Gastrocnemius medialis (tissue), 4 donors: ENCODE measurements at regions of chr22 and their contacts with region 1.

Region 1: GRCh38 chr22:23786752-23787599 is at the start of gene SMARCB1:
- DNase-seq: peak; percentile 90 to 97
- ATAC-seq: peak; percentile 96
- H3K4me3 ChIP-seq: peak within 1 kb of the TSS; percentile 78 to 93 (median 84)
- H3K27ac ChIP-seq: peak within 1 kb of the TSS; percentile 96 to 100 (median 98)
- H3K4me1 ChIP-seq: peaks cover 27 to 34% of the 10 kb centered on the region in 2 donors
- H3K27me3 ChIP-seq: no peaks in the 10 kb centered on the region
- CTCF ChIP-seq: peak in 2 of 5 experiments; percentile 20 to 23
- POLR2A ChIP-seq: peak; percentile 87 to 88
- total RNA-seq, gene SMARCB1: 37.8 to 65.6 (median 55.2) TPM

Region 2: DNA sequence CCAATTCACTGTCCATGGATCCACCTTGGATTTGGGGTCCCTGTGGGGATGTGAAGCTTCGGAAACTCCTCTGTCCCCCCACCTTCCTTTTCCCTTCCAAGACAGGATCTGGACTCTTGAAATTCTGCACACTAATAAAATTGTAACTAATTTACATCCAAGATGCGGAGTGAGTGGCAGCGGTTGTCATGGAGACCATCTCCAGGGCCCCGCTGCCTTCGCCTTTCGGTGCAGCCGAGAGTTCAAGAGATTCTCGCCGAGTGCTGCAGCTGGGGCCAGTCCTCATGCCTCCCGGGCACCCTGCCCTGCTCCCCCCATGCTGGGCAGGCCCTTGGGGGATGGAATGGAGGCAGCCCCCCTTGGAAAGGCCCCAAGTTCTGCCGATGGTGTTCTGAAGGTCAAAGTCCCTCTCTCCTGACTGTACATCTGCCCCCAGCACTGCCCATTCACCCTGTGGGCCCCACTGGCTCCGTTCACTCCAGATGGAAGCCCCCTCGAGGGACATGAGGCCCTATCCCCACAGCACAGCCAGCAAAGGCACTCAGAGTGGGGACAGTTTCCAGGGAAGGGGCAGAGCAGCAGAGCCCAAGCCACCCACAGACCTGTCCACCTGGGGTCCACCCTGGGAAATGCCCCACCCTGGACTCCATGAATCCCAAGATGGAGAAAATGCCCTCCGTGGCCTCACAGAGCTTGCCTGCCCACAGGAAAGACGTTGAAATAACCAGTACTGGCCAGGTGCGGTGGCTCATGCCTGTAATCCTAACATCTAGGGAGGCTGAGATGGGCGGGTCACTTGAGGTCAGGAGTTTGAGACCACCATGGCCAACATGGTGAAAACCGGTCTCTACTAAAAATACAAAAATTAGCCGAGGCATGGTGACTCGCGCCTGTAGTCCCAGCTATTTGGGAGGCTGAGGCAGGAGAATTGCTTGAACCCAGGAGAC is 232.8 kb before region 1 on chr22:
- in situ Hi-C with region 1: no loop called
- intact Hi-C with region 1: no loop called
- DNase-seq: no peak
- ATAC-seq: no peak
- H3K4me3 ChIP-seq: no peak overlapping the region
- H3K27ac ChIP-seq: no peak overlapping the region
- H3K4me1 ChIP-seq: no peaks in the 10 kb centered on the region
- H3K27me3 ChIP-seq: peaks cover 0 to 13% (median 11%) of the 10 kb centered on the region in 3 donors
- CTCF ChIP-seq: no peak
- POLR2A ChIP-seq: no peak

Region 3: GRCh38 chr22:23750714-23751440 is 36.1 kb before region 1 on chr22 and contains the start of gene ZNF70:
- in situ Hi-C with region 1: no loop called
- intact Hi-C with region 1: loop called (anchors 2 kb)
- DNase-seq: peak; percentile 67 to 85
- ATAC-seq: peak; percentile 73 to 80
- H3K4me3 ChIP-seq: peak within 1 kb of the TSS; percentile 62 to 89 (median 76)
- H3K27ac ChIP-seq: peak within 1 kb of the TSS; percentile 78 to 89 (median 84)
- H3K4me1 ChIP-seq: peaks cover 9 to 10% of the 10 kb centered on the region in 2 donors
- H3K27me3 ChIP-seq: no peaks in the 10 kb centered on the region
- CTCF ChIP-seq: peak in 3 of 5 experiments; percentile 12 to 30 (median 22)
- POLR2A ChIP-seq: peak; percentile 73 to 74
- total RNA-seq, gene ZNF70: 3.1 to 6.3 (median 4.2) TPM

Region 4: GRCh38 chr22:23823331-23823791 is 36.4 kb after region 1 on chr22:
- in situ Hi-C with region 1: no loop called
- intact Hi-C with region 1: loop called (anchors 2 kb)
- DNase-seq: no peak
- ATAC-seq: no peak
- H3K4me3 ChIP-seq: no peak overlapping the region
- H3K27ac ChIP-seq: peak overlapping the region; percentile 72 to 88 (median 81)
- H3K4me1 ChIP-seq: peaks cover 15 to 25% of the 10 kb centered on the region in 2 donors
- H3K27me3 ChIP-seq: no peaks in the 10 kb centered on the region
- CTCF ChIP-seq: no peak
- POLR2A ChIP-seq: no peak

Region 5: DNA sequence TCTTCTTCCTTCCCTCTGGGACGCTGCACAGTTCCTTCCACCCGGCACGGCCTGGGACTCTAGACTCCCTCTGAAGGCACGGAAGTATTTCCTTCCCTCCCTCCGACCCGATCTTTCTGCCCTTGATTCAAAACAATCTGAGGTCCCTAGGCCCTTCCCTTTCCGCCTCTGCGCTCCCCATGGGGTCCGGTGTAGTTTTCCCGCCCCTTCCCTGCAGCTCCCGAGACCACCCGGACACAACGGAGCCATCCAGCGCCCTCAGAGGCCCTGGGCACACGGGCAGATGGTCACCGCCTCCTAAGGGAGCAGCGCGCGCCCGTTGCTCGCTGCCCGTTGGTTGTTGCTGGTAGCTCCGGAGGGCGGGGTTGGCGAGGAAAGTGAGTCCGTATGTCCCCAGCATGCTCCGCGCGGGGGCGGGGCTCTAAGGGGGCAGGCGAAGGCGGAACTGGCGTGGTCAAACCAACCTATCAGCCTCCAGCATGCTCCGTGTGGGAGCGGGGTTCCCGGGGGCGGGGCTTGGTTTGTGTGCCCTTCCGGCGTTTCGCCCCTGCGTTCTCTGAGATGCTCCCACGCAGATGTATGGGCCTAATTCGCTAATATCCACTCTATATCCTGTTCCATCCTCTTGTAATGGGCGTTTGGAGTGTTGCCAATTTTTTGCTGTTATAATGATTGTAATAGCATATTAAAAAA is 126.8 kb after region 1 on chr22:
- in situ Hi-C with region 1: no loop called
- intact Hi-C with region 1: loop called (anchors 5 kb)
- DNase-seq: peak; percentile 98 to 100
- ATAC-seq: peak; percentile 98
- H3K4me3 ChIP-seq: peak overlapping the region; percentile 63 to 68 (median 66)
- H3K27ac ChIP-seq: peak overlapping the region; percentile 85 to 90 (median 88)
- H3K4me1 ChIP-seq: peaks cover 4 to 5% of the 10 kb centered on the region in 2 donors
- H3K27me3 ChIP-seq: no peaks in the 10 kb centered on the region
- CTCF ChIP-seq: no peak
- POLR2A ChIP-seq: peak; percentile 74 to 78

Region 6: GRCh38 chr22:24542641-24543040 is 755.7 kb after region 1 on chr22:
- in situ Hi-C with region 1: no loop called
- intact Hi-C with region 1: no loop called
- DNase-seq: peak; percentile 49 to 80
- ATAC-seq: peak; percentile 42 to 57
- H3K4me3 ChIP-seq: no peak overlapping the region
- H3K27ac ChIP-seq: peak overlapping the region; percentile 86 to 90 (median 89)
- H3K4me1 ChIP-seq: peaks cover 52 to 66% of the 10 kb centered on the region in 2 donors
- H3K27me3 ChIP-seq: no peaks in the 10 kb centered on the region
- CTCF ChIP-seq: peak in 4 of 5 experiments; percentile 27 to 58 (median 33)
- POLR2A ChIP-seq: no peak